HepG2 (cell line): ENCODE measurements at regions of chr12 and their contacts with region 1.

Region 1: DNA sequence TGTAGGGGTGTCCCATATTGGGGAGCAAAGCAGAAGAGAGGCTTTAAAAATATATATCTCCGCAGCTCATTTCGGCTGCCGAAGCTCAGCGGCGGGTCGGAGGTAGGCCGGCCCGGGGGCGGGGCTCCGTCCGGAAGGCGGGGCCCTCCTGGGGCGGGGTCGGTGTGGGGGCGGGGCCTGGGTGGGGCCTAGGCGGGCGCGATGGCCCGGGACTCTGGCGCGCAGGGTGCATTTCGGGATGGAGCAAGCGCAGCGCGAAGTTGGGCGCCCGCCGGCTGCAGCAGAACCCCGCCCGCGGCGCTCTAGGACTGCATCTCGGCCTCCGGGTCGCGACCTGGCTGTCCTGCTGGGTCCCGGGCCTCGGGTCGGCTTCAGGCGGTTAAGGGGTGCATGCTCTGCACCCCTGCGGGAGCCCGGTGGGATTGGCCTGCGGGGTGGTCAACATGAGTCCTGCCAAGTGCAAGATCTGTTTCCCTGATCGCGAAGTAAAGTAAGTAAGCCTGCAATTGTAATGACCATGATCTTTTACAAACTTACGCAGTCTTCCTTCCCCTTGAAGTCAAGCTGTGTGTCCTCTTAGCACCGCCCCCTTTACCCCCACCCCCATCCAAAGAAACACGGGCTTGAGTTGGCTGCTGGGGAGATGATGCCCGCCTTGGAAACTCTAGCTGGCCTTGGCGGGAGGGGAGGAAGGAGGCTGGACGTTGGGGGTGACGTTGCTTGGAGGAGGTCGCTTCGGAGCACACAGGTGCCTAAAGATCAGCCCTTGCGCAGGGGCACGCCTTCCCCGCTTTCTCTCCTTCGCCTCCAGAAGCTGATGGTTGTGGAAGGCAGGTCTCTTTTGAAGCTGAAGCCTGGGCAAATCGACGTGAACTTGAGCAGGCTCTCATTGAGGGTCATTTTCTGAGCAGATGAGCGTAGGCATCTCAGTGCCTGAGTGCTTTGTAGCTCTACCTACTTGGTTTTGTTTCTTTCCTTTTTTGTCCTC is 38.4 kb downstream of the ACACB start:
- DNase-seq: peak; percentile 51
- ATAC-seq: peak; percentile 96
- H3K4me3 ChIP-seq: peak overlapping the region; percentile 62 to 77 (median 75)
- H3K27ac ChIP-seq: peak overlapping the region; percentile 64
- H3K4me1 ChIP-seq: peaks cover 33% of the 10 kb centered on the region
- H3K27me3 ChIP-seq: no peaks in the 10 kb centered on the region
- CTCF ChIP-seq: peak; percentile 36; the same call in 1 of the 2 replicates
- EP300 ChIP-seq: no peak
- POLR2A ChIP-seq: peak in 1 of 2 experiments; percentile 68; a peak in 2 of 4 replicates
- RAD21 ChIP-seq: peak; percentile 65

Region 2: DNA sequence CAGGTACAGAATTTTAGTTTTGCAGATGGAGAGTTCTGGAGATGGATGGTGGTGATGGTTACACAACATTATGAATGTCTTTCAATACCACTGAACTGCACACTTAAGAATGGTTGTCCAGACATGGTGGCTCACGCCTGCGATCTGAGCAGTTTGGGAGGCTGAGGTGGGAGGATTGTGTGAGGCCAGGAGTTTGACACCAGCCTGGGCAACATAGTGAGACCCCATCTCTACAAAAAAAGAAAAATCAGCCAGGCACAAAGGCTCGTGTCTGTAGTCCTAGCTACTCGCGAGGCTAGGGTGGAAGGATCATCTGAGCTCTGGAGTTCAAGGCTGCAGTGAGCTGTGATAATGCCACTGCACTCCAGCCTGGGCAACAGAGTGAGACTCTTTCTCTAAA is 110.5 kb before region 1 on chr12:
- CTCF ChIA-PET with region 1: no interaction called
- POLR2A ChIA-PET with region 1: no interaction called
- in situ Hi-C with region 1: no loop called
- intact Hi-C with region 1: no loop called
- DNase-seq: no peak
- ATAC-seq: no peak
- H3K4me3 ChIP-seq: no peak overlapping the region
- H3K27ac ChIP-seq: no peak overlapping the region
- H3K4me1 ChIP-seq: no peaks in the 10 kb centered on the region
- H3K27me3 ChIP-seq: no peaks in the 10 kb centered on the region; a peak in 2 of 5 replicates
- CTCF ChIP-seq: no peak
- EP300 ChIP-seq: no peak
- POLR2A ChIP-seq: no peak
- RAD21 ChIP-seq: no peak

Region 3: GRCh38 chr12:109144224-109144623 is 10.5 kb before region 1 on chr12:
- CTCF ChIA-PET with region 1: no interaction called
- POLR2A ChIA-PET with region 1: interaction called, 13 read pairs
- in situ Hi-C with region 1: no loop called
- intact Hi-C with region 1: no loop called
- DNase-seq: no peak
- ATAC-seq: no peak
- H3K4me3 ChIP-seq: no peak overlapping the region
- H3K27ac ChIP-seq: no peak overlapping the region
- H3K4me1 ChIP-seq: peaks cover 26% of the 10 kb centered on the region
- H3K27me3 ChIP-seq: no peaks in the 10 kb centered on the region
- CTCF ChIP-seq: no peak
- EP300 ChIP-seq: no peak
- POLR2A ChIP-seq: no peak
- RAD21 ChIP-seq: no peak

Region 4: GRCh38 chr12:109232731-109233130 is 78.0 kb after region 1 on chr12:
- CTCF ChIA-PET with region 1: no interaction called
- POLR2A ChIA-PET with region 1: no interaction called
- in situ Hi-C with region 1: no loop called
- intact Hi-C with region 1: no loop called
- DNase-seq: no peak
- ATAC-seq: no peak
- H3K4me3 ChIP-seq: no peak overlapping the region
- H3K27ac ChIP-seq: no peak overlapping the region
- H3K4me1 ChIP-seq: peaks cover 12% of the 10 kb centered on the region
- H3K27me3 ChIP-seq: no peaks in the 10 kb centered on the region
- CTCF ChIP-seq: no peak
- EP300 ChIP-seq: no peak
- POLR2A ChIP-seq: no peak
- RAD21 ChIP-seq: no peak